Kidney (tissue), 22 donors: ENCODE measurements at regions of chr15 and their contacts with region 1.

Region 1: GRCh38 chr15:68559345-68560310 is 19.2 kb upstream of the CORO2B start:
- DNase-seq: peak; percentile 91 to 94 (median 93)
- H3K4me3 ChIP-seq: peak overlapping the region; percentile 55 to 66 (median 63)
- H3K27ac ChIP-seq: no peak overlapping the region
- H3K4me1 ChIP-seq: peaks cover 0 to 4% (median 0%) of the 10 kb centered on the region in 3 donors
- H3K27me3 ChIP-seq: no peaks in the 10 kb centered on the region
- CTCF ChIP-seq: peak; percentile 95

Region 2: GRCh38 chr15:68806220-68807060 is 246.8 kb after region 1 on chr15:
- intact Hi-C with region 1: no loop called
- DNase-seq: peak in 1 of 5 donors; percentile 30
- H3K4me3 ChIP-seq: no peak overlapping the region
- H3K27ac ChIP-seq: no peak overlapping the region
- H3K4me1 ChIP-seq: peaks cover 0 to 14% (median 14%) of the 10 kb centered on the region in 3 donors
- H3K27me3 ChIP-seq: no peaks in the 10 kb centered on the region
- CTCF ChIP-seq: no peak

Region 3: GRCh38 chr15:68874788-68875187 is 315.2 kb after region 1 on chr15:
- intact Hi-C with region 1: loop called (anchors 5 kb)
- DNase-seq: no peak
- H3K4me3 ChIP-seq: no peak overlapping the region
- H3K27ac ChIP-seq: no peak overlapping the region
- H3K4me1 ChIP-seq: no peaks in the 10 kb centered on the region
- H3K27me3 ChIP-seq: no peaks in the 10 kb centered on the region
- CTCF ChIP-seq: no peak

Region 4: GRCh38 chr15:68924866-68925560 is 365.4 kb after region 1 on chr15:
- intact Hi-C with region 1: loop called (anchors 5 kb)
- DNase-seq: peak; percentile 80 to 90 (median 82)
- H3K4me3 ChIP-seq: no peak overlapping the region
- H3K27ac ChIP-seq: no peak overlapping the region
- H3K4me1 ChIP-seq: no peaks in the 10 kb centered on the region
- H3K27me3 ChIP-seq: no peaks in the 10 kb centered on the region
- CTCF ChIP-seq: peak; percentile 68